Dendritic cell treated with granulocyte-macrophage colony-stimulating factor and Interleukin-4, amounts not matched to agents 40 ng/mL and 50 ng/mL, for 4 days (primary cell): ENCODE measurements at regions of chr17 and their contacts with region 1.

Region 1: GRCh38 chr17:79789534-79790353 is 7.1 kb downstream of the CBX8 start:
- H3K4me3 Mint-ChIP-seq: peak overlapping the region; percentile 20
- H3K27ac Mint-ChIP-seq: no peak overlapping the region
- H3K4me1 Mint-ChIP-seq: peaks cover 21% of the 10 kb centered on the region
- H3K27me3 Mint-ChIP-seq: peaks cover 89% of the 10 kb centered on the region

Region 2: GRCh38 chr17:79600681-79601131 is 189.0 kb before region 1 on chr17:
- intact Hi-C with region 1: no loop called
- H3K4me3 Mint-ChIP-seq: no peak overlapping the region
- H3K27ac Mint-ChIP-seq: no peak overlapping the region
- H3K4me1 Mint-ChIP-seq: no peaks in the 10 kb centered on the region
- H3K27me3 Mint-ChIP-seq: peaks cover 30% of the 10 kb centered on the region

Region 3: DNA sequence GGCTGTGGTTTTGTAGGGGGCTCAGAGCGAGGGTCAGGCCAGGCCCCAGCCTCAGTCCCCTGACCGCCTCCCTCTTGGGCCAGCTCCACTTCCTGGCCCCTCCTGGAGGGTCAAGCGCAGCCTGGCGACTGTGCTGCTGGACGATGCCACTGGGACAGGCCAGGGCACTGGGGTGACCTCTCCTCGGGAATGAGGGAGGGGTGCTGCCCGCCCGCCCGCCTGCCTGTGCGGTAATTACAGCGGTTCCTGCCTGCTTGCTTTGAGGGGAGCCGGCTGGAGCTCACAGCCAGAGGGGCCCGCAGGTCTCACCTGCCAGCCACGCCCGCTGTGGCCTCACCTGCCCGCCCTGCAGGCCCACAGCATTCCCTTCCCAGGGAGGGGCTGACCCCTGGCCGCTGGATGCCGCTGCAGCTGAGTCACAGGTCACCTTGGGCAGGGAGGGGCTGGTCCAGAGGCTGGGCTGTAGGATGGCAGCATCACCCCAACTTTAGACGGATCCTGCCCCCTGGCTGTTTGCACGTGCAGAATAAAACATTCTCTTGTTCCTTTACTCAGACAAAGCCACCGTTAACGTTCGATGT is 126.2 kb after region 1 on chr17:
- intact Hi-C with region 1: loop called (anchors 5 kb)
- H3K4me3 Mint-ChIP-seq: no peak overlapping the region
- H3K27ac Mint-ChIP-seq: no peak overlapping the region
- H3K4me1 Mint-ChIP-seq: peaks cover 5% of the 10 kb centered on the region
- H3K27me3 Mint-ChIP-seq: peaks cover 34% of the 10 kb centered on the region

Region 4: DNA sequence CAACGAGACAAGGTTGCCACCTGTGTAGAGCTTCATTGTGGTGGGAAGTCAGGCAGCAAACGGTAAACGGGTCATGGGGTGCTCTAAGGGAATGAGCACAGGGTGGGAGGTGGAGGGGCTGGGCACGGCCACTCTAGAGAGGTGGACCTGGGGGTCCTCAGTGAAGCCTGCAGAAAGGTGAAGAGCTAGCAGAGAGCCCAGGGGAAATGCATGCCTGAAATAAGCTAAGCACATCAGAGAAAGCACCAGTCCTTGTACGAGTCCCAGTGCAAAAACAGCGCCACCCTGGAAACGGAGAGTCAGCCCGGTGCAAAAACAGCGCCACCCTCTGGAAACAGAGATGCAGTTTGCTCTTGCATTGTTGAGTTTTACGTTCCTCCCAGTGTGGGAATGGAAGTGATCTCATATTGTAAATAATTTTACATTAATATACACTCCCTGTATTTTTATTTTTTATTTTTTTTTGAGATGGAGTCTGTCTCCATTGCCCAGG is 180.9 kb after region 1 on chr17:
- intact Hi-C with region 1: loop called (anchors 2 kb)
- H3K4me3 Mint-ChIP-seq: no peak overlapping the region
- H3K27ac Mint-ChIP-seq: no peak overlapping the region
- H3K4me1 Mint-ChIP-seq: no peaks in the 10 kb centered on the region
- H3K27me3 Mint-ChIP-seq: peaks cover 11% of the 10 kb centered on the region

Region 5: GRCh38 chr17:79991140-79991923 is 201.6 kb after region 1 on chr17:
- intact Hi-C with region 1: loop called (anchors 5 kb)
- H3K4me3 Mint-ChIP-seq: no peak overlapping the region
- H3K27ac Mint-ChIP-seq: no peak overlapping the region
- H3K4me1 Mint-ChIP-seq: peaks cover 25% of the 10 kb centered on the region
- H3K27me3 Mint-ChIP-seq: peaks cover 36% of the 10 kb centered on the region